Sigmoid colon (tissue), 7 donors: ENCODE measurements at regions of chr7 and their contacts with region 1.

Region 1: DNA sequence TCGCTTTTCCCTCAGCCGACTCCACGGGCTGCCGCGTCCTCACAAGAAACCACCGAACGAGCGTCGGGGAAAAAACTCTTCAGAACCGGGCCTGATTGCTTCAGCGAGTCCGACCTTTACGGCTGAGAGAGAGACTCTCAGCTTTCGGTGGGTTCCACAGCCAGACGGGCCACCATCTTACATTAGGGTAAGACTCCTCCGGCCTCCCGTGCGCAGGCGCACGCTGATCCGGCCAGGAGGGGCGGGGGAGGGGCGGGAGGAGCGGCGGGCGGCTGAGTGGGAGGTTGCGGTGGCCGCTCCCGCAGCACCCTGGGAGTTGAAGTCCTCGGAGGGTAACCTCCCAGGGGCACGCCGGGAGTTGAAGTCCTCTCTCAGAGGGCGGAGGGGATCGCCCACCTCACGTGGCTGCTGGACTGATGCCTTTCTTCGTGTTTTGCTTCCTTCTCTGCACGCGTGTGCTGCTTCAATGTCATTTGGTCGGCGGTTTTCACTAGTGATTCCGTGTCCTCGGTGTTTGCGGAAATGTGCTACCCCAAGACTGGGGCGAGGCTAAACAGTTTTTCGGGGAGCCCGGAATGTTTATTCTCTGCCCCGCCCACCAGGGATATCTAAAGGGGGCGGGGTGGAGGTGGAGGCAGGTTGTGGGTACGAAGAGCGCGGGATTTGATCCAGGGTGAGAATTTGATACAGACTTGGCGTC is at the start of gene CNOT4:
- DNase-seq: peak; percentile 98
- H3K4me3 ChIP-seq: peak within 1 kb of the TSS; percentile 68 to 82 (median 80)
- H3K27ac ChIP-seq: peak within 1 kb of the TSS; percentile 92 to 97 (median 94)
- H3K4me1 ChIP-seq: peaks cover 0 to 35% (median 29%) of the 10 kb centered on the region in 4 donors
- H3K27me3 ChIP-seq: no peaks in the 10 kb centered on the region
- CTCF ChIP-seq: no peak
- EP300 ChIP-seq: no peak
- POLR2A ChIP-seq: peak in 1 of 2 donors; percentile 37
- total RNA-seq, gene CNOT4: 23.5 to 31.6 (median 27.2) TPM

Region 2: GRCh38 chr7:134327896-134328295 is 1182.2 kb before region 1 on chr7:
- intact Hi-C with region 1: no loop called
- DNase-seq: no peak
- H3K4me3 ChIP-seq: no peak overlapping the region
- H3K27ac ChIP-seq: no peak overlapping the region
- H3K4me1 ChIP-seq: no peaks in the 10 kb centered on the region
- H3K27me3 ChIP-seq: no peaks in the 10 kb centered on the region
- CTCF ChIP-seq: peak in 1 of 4 experiments; percentile 29
- EP300 ChIP-seq: no peak
- POLR2A ChIP-seq: no peak

Region 3: GRCh38 chr7:134782121-134782623 is 727.9 kb before region 1 on chr7:
- intact Hi-C with region 1: no loop called
- DNase-seq: no peak
- H3K4me3 ChIP-seq: peak overlapping the region; percentile 52 to 66 (median 66)
- H3K27ac ChIP-seq: peak overlapping the region; percentile 91 to 94 (median 93)
- H3K4me1 ChIP-seq: peaks cover 0 to 68% (median 51%) of the 10 kb centered on the region in 4 donors
- H3K27me3 ChIP-seq: no peaks in the 10 kb centered on the region
- CTCF ChIP-seq: no peak
- EP300 ChIP-seq: no peak
- POLR2A ChIP-seq: no peak

Region 4: DNA sequence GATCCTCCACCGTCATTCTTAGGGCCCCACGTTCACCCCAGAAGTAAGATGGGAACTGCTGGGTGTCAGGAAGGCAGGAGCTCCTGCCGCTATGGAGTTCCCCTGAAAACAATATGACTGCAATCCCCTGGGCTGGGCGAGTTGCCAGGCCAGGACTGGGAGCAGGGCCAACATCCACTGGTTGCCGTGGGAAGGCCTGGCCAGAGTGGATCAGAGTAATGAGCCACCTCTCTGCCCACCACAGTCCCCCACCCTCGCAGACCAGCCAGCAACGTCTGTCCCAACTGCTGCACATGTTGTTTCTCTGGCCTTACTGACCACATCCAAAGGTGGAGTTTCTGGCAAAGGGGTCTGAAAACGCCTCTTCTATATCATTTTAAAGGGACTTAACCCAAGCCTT is 189.8 kb before region 1 on chr7:
- intact Hi-C with region 1: no loop called
- DNase-seq: peak; percentile 82
- H3K4me3 ChIP-seq: no peak overlapping the region
- H3K27ac ChIP-seq: peak overlapping the region in 1 of 4 donors; percentile 22
- H3K4me1 ChIP-seq: peaks cover 0 to 22% (median 17%) of the 10 kb centered on the region in 4 donors
- H3K27me3 ChIP-seq: no peaks in the 10 kb centered on the region
- CTCF ChIP-seq: no peak
- EP300 ChIP-seq: no peak
- POLR2A ChIP-seq: no peak

Region 5: DNA sequence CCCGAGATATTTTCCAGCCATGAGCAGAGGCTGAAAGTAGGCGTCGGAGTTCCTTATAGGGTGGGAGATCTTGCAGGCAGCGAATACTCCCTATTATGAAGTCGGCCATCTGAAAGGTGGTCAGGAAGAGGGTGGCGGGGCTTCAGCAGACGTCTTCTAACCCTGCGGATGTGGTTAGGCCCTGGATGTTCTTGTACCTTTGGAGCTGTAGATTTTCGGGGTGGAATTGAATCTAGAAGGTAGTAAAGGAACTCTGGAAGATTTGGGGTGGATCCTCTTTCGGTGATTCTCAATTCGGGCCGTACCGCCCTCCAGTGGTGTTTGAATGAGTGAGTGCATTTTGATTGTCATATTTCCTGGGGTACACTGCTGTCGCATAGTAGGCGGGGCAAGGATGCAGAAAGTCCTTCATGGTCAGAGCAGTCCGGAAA is 48.3 kb after region 1 on chr7:
- intact Hi-C with region 1: loop called (anchors 2 kb)
- DNase-seq: no peak
- H3K4me3 ChIP-seq: peak overlapping the region; percentile 55 to 72 (median 64)
- H3K27ac ChIP-seq: peak overlapping the region; percentile 86 to 92 (median 89)
- H3K4me1 ChIP-seq: peaks cover 0 to 21% (median 17%) of the 10 kb centered on the region in 4 donors
- H3K27me3 ChIP-seq: no peaks in the 10 kb centered on the region
- CTCF ChIP-seq: peak in 3 of 4 experiments; percentile 24 to 44 (median 34)
- EP300 ChIP-seq: no peak
- POLR2A ChIP-seq: no peak